GM10248 (cell line): ENCODE measurements at regions of chr10 and their contacts with region 1.

Region 1: GRCh38 chr10:11014671-11015445 is 2.8 kb upstream of the CELF2 start:
- DNase-seq: no peak
- CTCF ChIP-seq: no peak

Region 2: DNA sequence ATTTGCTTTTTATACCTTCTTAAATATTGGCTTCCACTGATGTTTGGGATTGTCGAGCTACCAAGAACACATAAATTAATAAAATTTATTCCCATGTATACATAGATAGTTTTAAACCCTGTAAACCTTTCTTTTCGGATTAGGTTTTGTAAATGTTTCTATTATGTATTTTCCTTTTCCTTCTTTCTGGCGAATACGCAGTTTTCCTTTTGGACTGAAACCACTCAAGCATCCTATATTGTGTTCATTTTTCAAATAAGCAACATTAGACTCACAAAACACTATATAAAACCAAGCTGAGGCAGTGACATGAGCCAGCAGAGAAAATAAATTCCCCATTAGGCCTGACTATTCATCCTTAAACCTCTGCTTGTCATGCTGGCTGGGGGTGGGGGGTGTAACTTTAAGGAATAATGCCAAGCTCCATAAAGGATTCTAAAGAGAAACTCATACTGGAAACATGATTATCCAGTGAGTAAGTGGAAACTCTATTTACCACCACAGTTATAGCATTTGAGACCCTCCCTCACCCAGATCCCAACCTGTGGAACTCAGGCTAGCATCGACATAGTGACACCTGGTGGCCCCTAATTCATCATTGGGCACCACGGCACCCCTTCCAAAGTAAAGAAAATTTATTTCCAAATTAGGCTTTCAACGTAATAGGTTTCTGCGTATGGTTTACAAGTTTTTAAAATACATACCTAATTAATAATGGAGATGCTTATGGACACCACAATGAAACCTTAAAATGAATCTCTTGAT is 83.7 kb before region 1 on chr10:
- CTCF ChIA-PET with region 1: no interaction called
- POLR2A ChIA-PET with region 1: no interaction called
- DNase-seq: no peak
- CTCF ChIP-seq: no peak

Region 3: DNA sequence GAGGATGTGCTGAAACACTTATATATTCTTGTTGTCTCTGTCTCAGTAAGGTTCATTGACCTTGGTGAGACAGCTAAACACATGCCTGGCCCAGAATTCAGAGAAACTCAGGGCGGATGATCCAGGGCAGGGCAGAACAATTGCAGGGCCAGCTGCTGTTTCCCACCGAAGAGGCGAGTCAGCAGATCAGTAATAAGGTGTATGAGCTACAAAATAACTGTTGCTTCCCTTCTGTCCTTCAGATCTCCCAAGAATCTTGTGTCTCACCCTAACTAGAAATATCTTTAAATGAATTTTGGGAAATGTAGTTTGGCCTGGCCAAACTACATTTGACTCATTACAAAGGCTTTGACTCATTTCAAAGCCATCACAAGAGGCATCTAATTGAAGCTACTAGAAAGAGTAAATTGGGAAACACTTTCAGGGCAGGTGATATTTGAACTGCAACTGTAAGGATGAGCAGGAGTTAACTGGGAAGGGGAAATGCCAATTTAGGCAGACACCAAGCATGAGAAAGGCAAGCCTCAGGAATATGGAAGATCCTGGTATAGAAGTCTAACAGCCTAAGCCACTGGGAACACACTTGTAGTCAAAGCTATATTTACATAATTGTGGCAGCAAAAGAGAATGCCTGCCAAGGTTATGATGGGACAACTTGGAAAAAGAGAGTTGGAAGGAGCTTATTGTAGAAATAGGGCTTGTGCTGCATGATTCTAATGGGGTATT is 21.7 kb before region 1 on chr10:
- CTCF ChIA-PET with region 1: no interaction called
- POLR2A ChIA-PET with region 1: no interaction called
- DNase-seq: no peak
- CTCF ChIP-seq: no peak

Region 4: DNA sequence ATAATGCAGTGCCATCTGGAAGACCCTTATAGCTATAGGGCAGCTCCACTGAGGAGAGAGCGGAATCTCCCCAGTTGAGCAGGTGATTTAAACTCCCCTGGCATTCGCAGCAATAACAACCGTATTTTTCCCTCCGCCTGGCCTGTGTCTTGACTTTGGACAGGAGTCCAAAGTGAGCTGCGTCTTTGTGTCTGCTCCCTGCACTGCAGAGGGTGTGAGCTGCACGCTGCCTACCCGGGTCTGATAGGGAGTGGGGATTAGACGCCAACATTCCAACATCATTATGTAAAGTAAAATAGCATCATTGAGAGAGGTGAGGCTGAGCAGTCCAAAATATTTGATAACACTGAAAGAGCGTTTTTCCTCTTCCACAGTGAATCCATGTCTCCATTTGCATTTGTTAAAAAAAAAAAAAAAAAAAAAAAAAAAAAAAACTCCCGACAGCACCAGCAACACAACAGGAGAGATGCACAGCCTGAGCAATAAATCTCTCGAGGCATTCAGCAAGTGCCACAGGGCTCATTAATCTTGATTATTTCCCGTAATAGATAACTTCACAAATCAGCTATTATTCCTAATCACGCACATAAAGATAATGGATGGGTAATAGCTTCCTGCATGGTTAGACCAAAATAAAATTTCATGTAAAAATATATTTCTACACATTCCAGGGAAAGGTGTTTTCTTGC is 71.5 kb after region 1 on chr10:
- CTCF ChIA-PET with region 1: interaction called, 3 read pairs
- POLR2A ChIA-PET with region 1: interaction called, 13 read pairs
- DNase-seq: no peak
- CTCF ChIP-seq: no peak

Region 5: GRCh38 chr10:11141571-11142091 is 126.8 kb after region 1 on chr10:
- CTCF ChIA-PET with region 1: no interaction called
- POLR2A ChIA-PET with region 1: no interaction called
- DNase-seq: no peak
- CTCF ChIP-seq: no peak

Region 6: DNA sequence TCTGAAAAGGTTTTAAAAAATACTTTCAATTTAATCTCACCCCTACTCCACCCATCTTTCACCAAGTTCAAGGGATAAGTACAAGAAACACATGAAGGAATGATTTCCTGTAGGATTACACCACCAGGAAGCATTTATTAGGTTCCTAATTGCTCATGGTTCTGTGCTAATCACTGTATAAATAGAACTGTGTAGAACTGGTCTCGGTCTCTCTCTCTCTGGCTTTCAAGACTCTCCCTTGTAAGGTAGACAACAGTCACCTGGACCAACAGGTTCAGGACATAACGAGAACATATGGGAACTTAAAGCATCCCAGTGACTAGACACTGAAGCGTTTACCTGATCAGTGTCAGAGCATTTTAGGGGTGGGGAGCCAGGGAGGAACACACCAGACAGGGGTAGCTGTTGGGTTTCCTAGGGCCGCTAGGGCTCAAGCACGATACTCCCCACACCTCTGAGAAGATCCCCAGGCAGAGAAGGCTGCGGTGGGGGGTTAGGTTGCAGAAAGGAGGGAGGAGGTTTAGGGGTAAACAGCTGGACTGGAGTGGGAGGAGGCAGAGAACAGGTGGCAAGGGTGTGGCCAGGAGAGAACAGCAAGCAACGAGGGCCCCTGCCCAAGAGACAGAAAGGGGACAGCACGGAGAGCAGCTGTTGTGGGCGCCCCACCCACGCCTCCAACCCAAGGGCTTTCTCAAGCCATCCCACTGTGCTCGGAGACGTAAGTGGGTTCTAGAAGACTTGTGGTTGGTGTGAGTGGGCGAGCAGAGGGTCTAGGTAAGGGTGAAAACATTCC is 649.1 kb after region 1 on chr10:
- CTCF ChIA-PET with region 1: no interaction called
- POLR2A ChIA-PET with region 1: no interaction called
- DNase-seq: peak; percentile 67
- CTCF ChIP-seq: no peak